Ascending aorta (tissue), 2 donors: ENCODE measurements at regions of chr1 and their contacts with region 1.

Region 1: DNA sequence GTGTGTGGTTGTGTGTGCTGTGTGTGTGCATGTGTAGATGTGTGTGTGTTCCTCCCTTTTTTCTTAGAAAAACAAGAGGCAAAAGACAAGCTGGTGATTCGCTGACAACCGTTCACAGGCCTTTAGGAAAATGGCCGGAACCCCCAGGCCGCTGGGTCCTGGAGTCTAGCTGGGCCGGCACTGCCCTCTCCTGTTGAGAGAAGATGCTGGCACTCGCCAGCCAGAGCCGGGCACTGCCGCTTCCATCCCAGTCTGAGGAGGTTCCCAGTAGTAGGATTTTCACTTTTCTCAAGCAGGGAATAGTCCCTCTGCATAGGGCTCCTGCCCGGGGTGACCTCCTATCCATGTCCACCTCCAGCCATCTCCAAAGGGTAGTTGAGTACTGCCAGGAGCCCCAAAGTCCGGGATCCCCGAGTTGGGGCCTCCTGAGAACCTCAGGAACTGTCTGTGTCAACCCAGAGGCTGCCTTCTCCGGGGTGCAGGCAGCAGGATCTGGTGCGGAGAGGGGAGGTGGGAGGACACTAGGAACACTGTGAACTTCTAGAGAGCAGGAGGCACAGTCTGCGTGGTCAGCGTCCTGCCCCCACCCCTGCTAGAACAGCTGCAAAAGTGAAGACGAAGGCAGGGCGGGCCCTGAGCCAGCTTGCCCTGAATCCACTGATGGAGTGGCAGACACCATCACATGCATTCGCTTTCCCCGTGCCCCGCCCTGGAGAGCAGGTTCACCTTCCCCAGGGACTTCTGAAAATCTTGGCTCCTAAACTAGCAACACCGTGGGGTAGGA is 44.1 kb upstream of the ARHGEF16 start:
- DNase-seq: peak in 1 of 2 donors; percentile 77
- H3K4me3 ChIP-seq: no peak overlapping the region
- H3K27ac ChIP-seq: peak overlapping the region in 1 of 2 donors; percentile 13
- H3K4me1 ChIP-seq: peaks cover 0 to 3% of the 10 kb centered on the region in 2 donors
- H3K27me3 ChIP-seq: no peaks in the 10 kb centered on the region
- CTCF ChIP-seq: peak; percentile 79 to 85 (median 79)

Region 2: GRCh38 chr1:3292868-3293562 is 117.3 kb before region 1 on chr1:
- intact Hi-C with region 1: loop called (anchors 5 kb)
- DNase-seq: no peak
- H3K4me3 ChIP-seq: no peak overlapping the region
- H3K27ac ChIP-seq: no peak overlapping the region
- H3K4me1 ChIP-seq: peaks cover 4 to 9% of the 10 kb centered on the region in 2 donors
- H3K27me3 ChIP-seq: no peaks in the 10 kb centered on the region
- CTCF ChIP-seq: no peak

Region 3: DNA sequence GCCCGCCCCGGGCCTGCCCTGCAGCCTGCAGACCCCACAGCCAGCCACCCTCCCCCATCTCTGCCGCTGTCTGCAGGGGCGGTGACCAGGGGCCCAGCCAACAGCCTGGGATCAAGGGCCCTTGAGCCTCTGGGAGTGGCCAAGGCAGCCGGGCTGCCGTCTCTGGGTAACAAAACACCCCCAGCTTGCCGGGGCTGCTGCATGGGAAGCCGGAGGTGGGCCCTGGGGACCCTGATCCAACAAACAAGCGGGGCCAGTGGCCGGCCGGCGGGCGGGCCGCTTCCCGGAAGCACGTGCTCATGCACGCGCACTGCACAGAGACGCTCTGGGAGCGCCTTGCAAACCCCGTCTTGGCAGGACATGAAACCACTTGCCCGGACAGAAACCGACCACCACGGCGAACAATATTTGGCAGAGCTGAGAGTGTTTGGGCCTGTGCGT is 187.7 kb after region 1 on chr1:
- intact Hi-C with region 1: no loop called
- DNase-seq: no peak
- H3K4me3 ChIP-seq: no peak overlapping the region
- H3K27ac ChIP-seq: no peak overlapping the region
- H3K4me1 ChIP-seq: no peaks in the 10 kb centered on the region
- H3K27me3 ChIP-seq: no peaks in the 10 kb centered on the region
- CTCF ChIP-seq: no peak